Caco-2 (cell line): ENCODE measurements at regions of chr6 and their contacts with region 1.

Region 1: GRCh38 chr6:79869600-79870084 is 77.7 kb downstream of the ELOVL4 start:
- DNase-seq: peak; percentile 80 to 88
- H3K4me3 ChIP-seq: 0 out of 2 replicates have a peak overlapping the region, but pooled peaks have one; percentile 4
- H3K4me3 Mint-ChIP-seq: peak overlapping the region; percentile 42
- H3K27ac Mint-ChIP-seq: no peak overlapping the region
- H3K4me1 ChIP-seq: no peaks in the 10 kb centered on the region; the same call in 1 of the 2 replicates
- H3K4me1 Mint-ChIP-seq: peaks cover 25% of the 10 kb centered on the region
- H3K27me3 ChIP-seq: no peaks in the 10 kb centered on the region
- H3K27me3 Mint-ChIP-seq: no peaks in the 10 kb centered on the region
- CTCF ChIP-seq: peak; percentile 86 to 95

Region 2: GRCh38 chr6:79762370-79762769 is 107.3 kb before region 1 on chr6:
- CTCF ChIA-PET with region 1: interaction called, 4 read pairs
- POLR2A ChIA-PET with region 1: no interaction called
- intact Hi-C with region 1: loop called (anchors 1 kb)
- DNase-seq: peak in 1 of 2 experiments; percentile 7
- H3K4me3 ChIP-seq: no peak overlapping the region
- H3K4me3 Mint-ChIP-seq: no peak overlapping the region
- H3K27ac Mint-ChIP-seq: no peak overlapping the region
- H3K4me1 ChIP-seq: no peaks in the 10 kb centered on the region
- H3K4me1 Mint-ChIP-seq: no peaks in the 10 kb centered on the region
- H3K27me3 ChIP-seq: no peaks in the 10 kb centered on the region
- H3K27me3 Mint-ChIP-seq: peaks cover 2% of the 10 kb centered on the region
- CTCF ChIP-seq: peak; percentile 25 to 49

Region 3: DNA sequence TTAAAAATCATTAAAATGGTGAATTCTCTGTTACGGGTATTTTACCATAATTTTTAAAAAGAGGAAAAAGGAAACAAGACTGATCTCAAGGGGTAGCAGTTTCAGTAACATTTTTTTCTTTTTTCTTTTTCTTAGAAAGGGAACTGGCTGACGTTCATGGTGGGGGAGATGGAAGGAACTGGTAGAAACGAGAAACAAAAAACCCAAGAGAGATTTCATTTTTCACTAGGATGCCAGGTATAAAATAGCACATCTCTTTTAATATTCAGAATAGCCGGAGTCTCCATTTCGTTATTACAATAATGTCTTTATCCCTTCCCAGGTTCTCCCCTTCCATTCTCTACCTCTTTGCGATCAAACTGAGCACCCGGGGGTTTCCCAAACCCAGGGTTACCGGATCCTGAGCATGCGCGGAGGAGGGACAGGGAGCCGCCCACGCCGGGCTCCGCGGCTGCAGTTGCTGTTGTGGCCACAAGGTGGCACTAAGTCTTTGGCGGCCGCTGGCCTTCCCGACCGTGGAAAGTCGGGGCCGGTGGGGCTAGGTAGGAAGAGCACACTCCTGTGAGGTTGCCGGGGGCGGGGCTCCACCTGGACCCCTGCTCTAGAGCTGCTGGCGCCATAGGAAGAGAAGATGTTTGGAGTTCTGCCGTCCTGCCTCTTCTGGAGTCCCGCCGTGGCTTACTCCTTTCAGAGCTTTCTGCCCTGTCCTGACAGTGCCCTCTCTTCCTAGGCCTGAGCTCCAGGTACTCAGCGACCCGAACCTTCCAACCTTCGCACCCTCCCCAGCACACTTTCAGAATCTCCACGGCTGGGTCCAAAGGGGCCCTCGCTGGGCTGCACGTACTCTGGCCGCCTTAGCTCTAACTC is 91.7 kb before region 1 on chr6:
- CTCF ChIA-PET with region 1: interaction called, 9 read pairs
- POLR2A ChIA-PET with region 1: no interaction called
- intact Hi-C with region 1: loop called (anchors 1 kb)
- DNase-seq: peak; percentile 48 to 76
- H3K4me3 ChIP-seq: no peak overlapping the region
- H3K4me3 Mint-ChIP-seq: peak overlapping the region; percentile 56
- H3K27ac Mint-ChIP-seq: no peak overlapping the region
- H3K4me1 ChIP-seq: no peaks in the 10 kb centered on the region
- H3K4me1 Mint-ChIP-seq: no peaks in the 10 kb centered on the region
- H3K27me3 ChIP-seq: no peaks in the 10 kb centered on the region
- H3K27me3 Mint-ChIP-seq: no peaks in the 10 kb centered on the region
- CTCF ChIP-seq: peak; percentile 75 to 81